IMR-90 (cell line): ENCODE measurements at regions of chr3 and their contacts with region 1.

Region 1: DNA sequence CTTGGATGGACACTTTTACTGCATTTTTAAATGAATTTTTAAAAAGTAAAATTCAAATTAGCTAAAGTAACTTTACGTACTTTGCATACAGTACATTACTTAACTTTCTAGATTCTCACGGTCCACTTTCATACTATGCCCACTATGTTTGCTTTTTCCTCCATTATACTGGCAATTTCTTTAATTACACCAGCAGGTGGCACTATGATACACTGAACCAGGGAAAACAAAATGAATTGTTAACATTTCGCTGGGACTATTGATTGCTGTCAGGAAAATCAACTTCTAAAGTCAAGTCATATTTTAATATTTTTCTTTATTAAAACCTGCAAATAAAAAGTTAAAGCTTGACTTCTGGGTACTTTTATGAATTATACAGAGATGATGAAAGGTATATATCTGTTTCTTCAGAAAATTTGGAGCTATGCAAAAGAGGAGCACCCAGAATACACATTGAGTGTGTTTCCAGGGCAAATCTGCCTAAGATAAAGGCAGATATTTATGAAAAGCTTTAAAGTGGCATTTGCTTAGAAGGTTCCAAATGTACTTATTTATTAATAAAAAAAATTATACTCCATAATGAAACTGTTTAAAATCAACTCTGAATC is 21.8 kb upstream of the POU1F1 start:
- DNase-seq: peak; percentile 32
- ATAC-seq: peak; percentile 71
- H3K4me3 ChIP-seq: no peak overlapping the region
- H3K27ac ChIP-seq: no peak overlapping the region
- H3K4me1 ChIP-seq: no peaks in the 10 kb centered on the region
- H3K27me3 ChIP-seq: no peaks in the 10 kb centered on the region; the same call in 1 of the 2 replicates
- CTCF ChIP-seq: peak; percentile 66
- POLR2A ChIP-seq: no peak
- RAD21 ChIP-seq: peak; percentile 66

Region 2: GRCh38 chr3:86104154-86104553 is 1194.1 kb before region 1 on chr3:
- CTCF ChIA-PET with region 1: no interaction called
- POLR2A ChIA-PET with region 1: no interaction called
- dilution Hi-C with region 1: no loop called
- in situ Hi-C with region 1: no loop called
- intact Hi-C with region 1: no loop called
- DNase-seq: no peak
- ATAC-seq: no peak
- H3K4me3 ChIP-seq: no peak overlapping the region
- H3K27ac ChIP-seq: no peak overlapping the region
- H3K4me1 ChIP-seq: no peaks in the 10 kb centered on the region
- H3K27me3 ChIP-seq: no peaks in the 10 kb centered on the region
- CTCF ChIP-seq: no peak
- POLR2A ChIP-seq: no peak
- RAD21 ChIP-seq: no peak

Region 3: GRCh38 chr3:87206074-87207034 is 91.9 kb before region 1 on chr3:
- CTCF ChIA-PET with region 1: no interaction called
- POLR2A ChIA-PET with region 1: no interaction called
- dilution Hi-C with region 1: no loop called
- in situ Hi-C with region 1: no loop called
- intact Hi-C with region 1: no loop called
- DNase-seq: peak; percentile 86
- ATAC-seq: peak; percentile 93
- H3K4me3 ChIP-seq: no peak overlapping the region
- H3K27ac ChIP-seq: no peak overlapping the region
- H3K4me1 ChIP-seq: no peaks in the 10 kb centered on the region
- H3K27me3 ChIP-seq: no peaks in the 10 kb centered on the region
- CTCF ChIP-seq: no peak
- POLR2A ChIP-seq: no peak
- RAD21 ChIP-seq: no peak

Region 4: GRCh38 chr3:87503900-87504508 is 205.8 kb after region 1 on chr3:
- CTCF ChIA-PET with region 1: no interaction called
- POLR2A ChIA-PET with region 1: no interaction called
- dilution Hi-C with region 1: no loop called
- in situ Hi-C with region 1: no loop called
- intact Hi-C with region 1: loop called (anchors 10 kb)
- DNase-seq: peak; percentile 36
- ATAC-seq: no peak
- H3K4me3 ChIP-seq: no peak overlapping the region
- H3K27ac ChIP-seq: no peak overlapping the region
- H3K4me1 ChIP-seq: no peaks in the 10 kb centered on the region
- H3K27me3 ChIP-seq: no peaks in the 10 kb centered on the region
- CTCF ChIP-seq: peak; percentile 81
- POLR2A ChIP-seq: no peak
- RAD21 ChIP-seq: peak; percentile 70

Region 5: DNA sequence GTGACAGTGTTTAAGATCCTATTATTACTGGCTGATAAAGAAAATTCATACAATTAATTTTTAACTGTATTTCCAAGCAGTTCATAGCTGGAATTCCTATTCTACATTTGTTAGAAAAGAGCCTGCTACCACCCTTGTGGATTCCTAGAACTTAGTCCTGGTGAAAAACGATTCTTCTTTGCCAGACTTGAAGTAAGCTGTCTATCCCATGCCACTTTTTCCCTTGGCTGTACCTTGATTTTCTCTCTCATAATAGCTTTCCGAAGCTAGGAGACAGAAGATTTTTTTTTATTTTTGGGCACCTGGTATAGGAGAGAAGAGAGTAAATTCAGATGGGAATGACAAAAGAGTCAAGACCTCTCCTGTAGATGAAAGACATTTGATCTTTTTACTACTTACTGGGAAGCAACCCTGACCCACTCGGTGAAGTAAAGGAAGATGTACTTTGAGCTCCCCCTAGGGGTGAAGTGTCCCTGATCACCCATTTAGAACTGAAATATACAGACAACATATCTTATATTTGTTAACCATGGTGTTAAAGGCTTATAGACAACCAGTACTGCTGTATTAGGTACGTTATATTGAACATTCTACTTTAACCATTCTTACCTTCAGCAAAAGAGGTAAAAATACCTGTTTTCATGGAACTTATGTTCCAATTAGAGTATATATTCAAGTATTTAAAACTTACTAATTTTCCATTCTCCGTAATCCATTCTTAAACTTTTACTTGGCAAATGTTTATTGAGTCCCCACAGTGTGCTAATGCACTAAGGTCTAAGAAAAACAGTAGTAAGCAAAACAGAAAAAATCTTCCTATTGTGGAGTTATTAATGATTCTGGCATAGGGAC is 815.3 kb after region 1 on chr3:
- CTCF ChIA-PET with region 1: interaction called, 3 read pairs
- POLR2A ChIA-PET with region 1: no interaction called
- dilution Hi-C with region 1: no loop called
- in situ Hi-C with region 1: no loop called
- intact Hi-C with region 1: loop called (anchors 2 kb)
- DNase-seq: peak; percentile 70
- ATAC-seq: peak; percentile 96
- H3K4me3 ChIP-seq: no peak overlapping the region
- H3K27ac ChIP-seq: no peak overlapping the region
- H3K4me1 ChIP-seq: no peaks in the 10 kb centered on the region
- H3K27me3 ChIP-seq: no peaks in the 10 kb centered on the region
- CTCF ChIP-seq: peak; percentile 74
- POLR2A ChIP-seq: no peak
- RAD21 ChIP-seq: peak; percentile 69

Region 6: GRCh38 chr3:88180398-88180999 is 882.3 kb after region 1 on chr3:
- CTCF ChIA-PET with region 1: interaction called, 5 read pairs
- POLR2A ChIA-PET with region 1: no interaction called
- dilution Hi-C with region 1: no loop called
- in situ Hi-C with region 1: no loop called
- intact Hi-C with region 1: loop called (anchors 1 kb)
- DNase-seq: peak; percentile 58
- ATAC-seq: peak; percentile 75
- H3K4me3 ChIP-seq: no peak overlapping the region
- H3K27ac ChIP-seq: no peak overlapping the region
- H3K4me1 ChIP-seq: no peaks in the 10 kb centered on the region; the same call in 1 of the 2 replicates
- H3K27me3 ChIP-seq: no peaks in the 10 kb centered on the region
- CTCF ChIP-seq: peak; percentile 60
- POLR2A ChIP-seq: no peak
- RAD21 ChIP-seq: peak; percentile 71